Naive thymus-derived CD8-positive, alpha-beta T cell (primary cell): ENCODE measurements at regions of chr12 and their contacts with region 1.

Region 1: DNA sequence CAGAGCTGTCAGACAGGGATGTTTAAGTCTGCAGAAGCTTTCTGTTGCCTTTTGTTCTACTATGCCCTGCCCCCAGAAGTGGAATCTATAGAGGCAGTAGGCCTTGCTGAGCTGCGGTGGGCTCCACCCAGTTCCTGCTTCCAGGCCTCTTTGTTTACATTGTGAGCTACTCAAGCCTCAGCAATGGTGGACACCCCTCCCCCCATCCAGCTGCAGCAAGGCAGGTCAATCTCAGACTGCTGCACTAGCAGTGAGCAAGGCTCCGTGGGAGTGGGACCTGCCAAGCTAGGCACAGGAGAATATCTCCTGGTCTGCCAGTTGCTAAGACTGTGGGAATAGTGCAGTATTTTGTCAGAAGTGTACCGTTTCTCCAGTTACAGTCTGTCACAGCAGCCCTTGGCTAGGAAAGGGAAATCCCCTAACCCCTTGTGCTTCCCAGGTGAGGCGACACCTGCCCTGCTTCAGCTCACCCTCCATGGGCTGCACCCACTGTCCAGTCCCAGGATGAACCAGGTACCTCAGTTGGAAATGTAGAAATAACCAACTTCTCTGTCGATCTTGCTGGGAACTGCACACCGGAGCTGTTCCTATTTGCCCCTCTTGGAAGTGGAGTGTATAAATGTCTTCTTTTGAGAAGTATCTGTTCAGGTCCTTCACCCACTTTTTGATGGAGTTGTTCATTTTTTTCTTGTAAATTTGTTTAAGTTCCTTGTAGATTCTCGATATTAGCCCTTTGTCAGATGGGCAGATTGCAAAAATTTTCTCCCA is 213.5 kb upstream of the SLC38A2 start:
- DNase-seq: peak in 9 of 10 donors; percentile 10 to 83 (median 55)
- ATAC-seq: peak; percentile 64 to 74
- H3K4me3 Mint-ChIP-seq: peak overlapping the region; percentile 46 to 81 (median 73)
- H3K27ac Mint-ChIP-seq: peak overlapping the region; percentile 87 to 96 (median 90)
- H3K4me1 Mint-ChIP-seq: peaks cover 46 to 63% (median 57%) of the 10 kb centered on the region in 4 donors
- H3K27me3 Mint-ChIP-seq: no peaks in the 10 kb centered on the region

Region 2: DNA sequence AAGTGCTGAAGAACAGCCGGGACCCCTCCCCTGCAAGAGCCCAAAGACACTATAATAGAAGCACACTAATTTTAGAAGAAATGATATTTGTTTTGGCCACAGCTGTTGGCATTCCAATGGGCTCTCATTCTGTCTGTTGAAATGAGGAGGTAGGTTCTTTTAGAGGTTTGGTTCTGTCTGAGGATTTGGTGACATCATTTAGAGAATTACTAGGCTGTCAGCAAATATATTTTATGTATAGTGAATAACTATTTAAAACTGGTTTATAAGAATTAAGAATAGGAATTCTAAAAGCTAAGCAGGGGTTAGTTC is 12.7 kb before region 1 on chr12:
- POLR2A ChIA-PET with region 1: no interaction called
- DNase-seq: no peak
- ATAC-seq: no peak
- H3K4me3 Mint-ChIP-seq: no peak overlapping the region
- H3K27ac Mint-ChIP-seq: no peak overlapping the region
- H3K4me1 Mint-ChIP-seq: peaks cover 0 to 5% (median 1%) of the 10 kb centered on the region in 4 donors
- H3K27me3 Mint-ChIP-seq: no peaks in the 10 kb centered on the region

Region 3: GRCh38 chr12:46608431-46609272 is 22.6 kb after region 1 on chr12:
- POLR2A ChIA-PET with region 1: interaction called, 26 read pairs
- DNase-seq: no peak
- ATAC-seq: no peak
- H3K4me3 Mint-ChIP-seq: peak overlapping the region in 9 of 10 donors; percentile 48 to 87 (median 76)
- H3K27ac Mint-ChIP-seq: peak overlapping the region; percentile 54 to 94 (median 84)
- H3K4me1 Mint-ChIP-seq: peaks cover 41 to 63% (median 48%) of the 10 kb centered on the region in 4 donors
- H3K27me3 Mint-ChIP-seq: no peaks in the 10 kb centered on the region

Region 4: DNA sequence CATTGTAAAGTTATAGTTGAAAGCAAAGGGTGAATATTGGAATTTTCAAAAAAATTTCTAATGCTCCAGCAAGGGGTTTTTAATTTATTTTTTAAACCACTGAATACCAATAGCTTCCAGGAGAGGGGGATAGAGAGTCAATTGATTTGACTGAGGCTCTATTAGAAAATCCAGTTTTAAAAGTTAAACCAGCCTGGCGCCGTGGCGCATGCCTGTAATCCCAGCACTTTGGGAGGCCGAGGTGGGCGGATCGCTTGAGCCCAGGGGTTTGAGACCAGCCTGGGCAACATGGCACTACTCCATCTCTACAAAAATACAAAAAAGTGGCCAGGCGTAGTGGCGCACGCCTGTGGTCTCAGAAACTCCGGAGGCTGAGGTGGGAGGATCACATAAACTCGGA is 89.7 kb after region 1 on chr12:
- POLR2A ChIA-PET with region 1: no interaction called
- DNase-seq: peak in 3 of 10 donors; percentile 21 to 37 (median 30)
- ATAC-seq: no peak
- H3K4me3 Mint-ChIP-seq: no peak overlapping the region
- H3K27ac Mint-ChIP-seq: no peak overlapping the region
- H3K4me1 Mint-ChIP-seq: peaks cover 0 to 2% (median 0%) of the 10 kb centered on the region in 4 donors
- H3K27me3 Mint-ChIP-seq: no peaks in the 10 kb centered on the region